Activated B cell treated with CpG ODN at 0.5 μM for 24 hours (primary cell): ENCODE measurements at regions of chr9 and their contacts with region 1.

Region 1: DNA sequence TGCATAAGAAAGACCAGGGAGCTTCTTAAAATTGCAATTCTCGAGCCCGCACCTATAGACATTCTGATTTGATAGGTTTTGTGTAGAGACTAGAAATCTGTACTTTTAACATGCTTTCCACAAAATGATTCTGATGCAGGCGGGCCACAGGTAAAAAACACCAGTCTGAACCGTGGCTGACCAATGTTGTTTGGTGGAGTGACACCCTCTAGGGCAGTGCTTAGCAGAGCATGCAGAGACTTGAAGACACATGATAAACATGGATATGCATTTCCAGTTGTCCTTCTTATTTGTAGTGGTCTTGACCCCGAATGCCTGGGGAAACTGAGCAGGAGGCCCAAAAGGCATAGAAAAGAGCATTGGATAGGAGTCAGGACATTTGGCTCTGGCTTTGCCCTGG is 10.5 kb upstream of the COL15A1 start:
- DNase-seq: no peak
- ATAC-seq: no peak
- H3K4me3 Mint-ChIP-seq: no peak overlapping the region
- H3K27ac Mint-ChIP-seq: no peak overlapping the region
- H3K4me1 Mint-ChIP-seq: no peaks in the 10 kb centered on the region
- H3K27me3 Mint-ChIP-seq: peaks cover 19% of the 10 kb centered on the region
- CTCF ChIP-seq: no peak

Region 2: DNA sequence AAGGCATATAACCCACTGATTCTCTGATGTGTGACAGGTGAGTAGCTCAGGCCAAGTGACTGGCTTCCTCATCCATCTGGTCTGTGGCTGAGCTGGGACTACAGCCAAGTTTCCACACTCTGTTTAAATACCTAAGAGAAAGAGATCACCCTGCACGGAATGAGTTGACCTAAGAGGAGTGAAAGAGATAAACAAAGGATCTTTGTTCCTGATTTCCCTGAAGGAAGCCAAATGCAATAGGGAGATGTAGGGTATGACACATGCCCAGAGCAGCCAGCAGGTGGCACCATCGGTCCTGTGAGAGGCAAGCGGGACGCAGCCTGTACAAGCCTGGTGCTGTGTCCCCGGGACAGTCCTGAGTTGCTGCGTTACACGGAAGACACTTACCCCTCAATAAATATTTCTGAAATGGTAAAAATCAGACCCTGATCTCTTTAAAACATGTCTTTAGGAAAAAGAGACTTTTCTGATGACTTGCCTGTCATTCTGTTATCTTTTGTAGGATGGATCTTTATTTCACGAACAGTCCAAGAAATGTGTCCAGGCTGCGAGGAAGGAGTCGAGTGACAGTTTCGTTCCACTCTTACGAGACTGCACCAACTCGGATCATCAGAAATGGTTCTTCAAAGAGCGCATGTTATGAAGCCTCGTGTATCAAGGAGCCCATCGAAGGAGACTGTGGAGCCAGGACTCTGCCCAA is 84.6 kb before region 1 on chr9:
- CTCF ChIA-PET with region 1: no interaction called
- POLR2A ChIA-PET with region 1: no interaction called
- intact Hi-C with region 1: no loop called
- DNase-seq: peak; percentile 59
- ATAC-seq: peak; percentile 97
- H3K4me3 Mint-ChIP-seq: no peak overlapping the region
- H3K27ac Mint-ChIP-seq: no peak overlapping the region
- H3K4me1 Mint-ChIP-seq: no peaks in the 10 kb centered on the region
- H3K27me3 Mint-ChIP-seq: no peaks in the 10 kb centered on the region
- CTCF ChIP-seq: peak; percentile 59

Region 3: DNA sequence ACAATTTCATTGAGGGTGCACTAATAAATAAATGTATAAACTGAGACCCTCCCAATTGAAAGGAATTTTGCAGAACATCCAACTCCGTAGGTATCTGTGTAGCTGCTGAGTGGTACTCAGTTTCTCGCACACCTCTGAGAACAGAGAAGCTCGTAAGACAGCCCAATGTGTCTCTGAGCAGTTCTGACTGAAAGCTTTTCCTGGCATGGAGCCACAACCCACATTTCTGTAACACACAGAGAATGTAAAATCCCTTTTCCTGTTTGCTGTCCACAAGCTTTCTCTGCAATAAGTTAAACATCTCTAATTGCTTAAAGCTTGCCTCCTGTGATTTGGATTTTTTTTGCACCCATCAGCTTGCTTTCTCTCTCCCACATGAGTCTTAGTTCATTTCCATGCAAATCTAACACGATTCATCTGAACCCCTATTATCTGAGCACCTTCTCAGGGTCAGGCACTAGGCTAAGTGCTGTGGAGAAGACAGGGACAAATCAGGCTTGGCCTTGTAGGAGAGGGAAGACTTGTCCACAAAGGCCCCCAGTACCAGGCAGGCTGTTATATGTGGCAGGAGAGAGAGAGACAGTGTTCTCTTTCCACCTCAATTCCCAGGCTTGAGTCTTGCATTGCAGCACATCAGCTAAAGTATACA is 33.7 kb before region 1 on chr9:
- CTCF ChIA-PET with region 1: no interaction called
- POLR2A ChIA-PET with region 1: no interaction called
- intact Hi-C with region 1: no loop called
- DNase-seq: no peak
- ATAC-seq: no peak
- H3K4me3 Mint-ChIP-seq: no peak overlapping the region
- H3K27ac Mint-ChIP-seq: no peak overlapping the region
- H3K4me1 Mint-ChIP-seq: no peaks in the 10 kb centered on the region
- H3K27me3 Mint-ChIP-seq: peaks cover 30% of the 10 kb centered on the region
- CTCF ChIP-seq: no peak

Region 4: GRCh38 chr9:98916660-98917059 is 16.5 kb before region 1 on chr9:
- CTCF ChIA-PET with region 1: no interaction called
- POLR2A ChIA-PET with region 1: no interaction called
- intact Hi-C with region 1: loop called (anchors 1 kb)
- DNase-seq: no peak
- ATAC-seq: no peak
- H3K4me3 Mint-ChIP-seq: no peak overlapping the region
- H3K27ac Mint-ChIP-seq: no peak overlapping the region
- H3K4me1 Mint-ChIP-seq: no peaks in the 10 kb centered on the region
- H3K27me3 Mint-ChIP-seq: peaks cover 6% of the 10 kb centered on the region
- CTCF ChIP-seq: no peak

Region 5: DNA sequence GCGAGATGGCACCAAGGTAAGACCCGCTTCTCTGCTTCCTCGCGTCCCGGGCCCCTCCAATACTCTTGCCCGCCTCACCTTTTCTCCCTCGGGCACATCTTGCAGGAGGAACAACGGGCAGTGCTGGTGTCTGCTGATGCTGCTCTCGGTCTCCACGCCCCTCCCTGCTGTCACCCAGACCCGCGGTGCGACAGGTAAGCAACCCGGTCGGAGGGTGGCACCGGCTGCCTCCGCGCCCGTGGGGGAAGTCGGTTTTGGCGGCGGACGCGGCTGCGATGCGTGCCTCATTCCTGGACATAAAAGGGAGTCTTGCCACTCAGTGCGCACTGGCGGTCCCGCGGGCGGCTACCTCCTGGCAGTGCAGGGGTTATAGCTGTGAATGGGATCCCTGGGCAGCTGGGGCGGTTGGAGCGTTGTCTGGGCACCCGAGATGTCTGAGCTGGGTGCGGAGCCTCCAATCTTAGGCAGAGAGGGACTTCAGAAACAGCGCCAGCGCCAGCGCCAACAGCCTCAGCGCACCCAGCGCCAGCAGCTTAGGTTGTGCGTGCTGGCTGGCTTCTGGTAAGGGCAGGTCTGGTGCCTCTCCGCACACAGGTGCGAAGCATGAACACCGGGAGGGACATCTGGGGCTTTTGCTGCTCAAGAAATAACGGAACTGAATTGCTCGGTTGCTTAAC is 11.0 kb after region 1 on chr9:
- CTCF ChIA-PET with region 1: no interaction called
- POLR2A ChIA-PET with region 1: no interaction called
- intact Hi-C with region 1: no loop called
- DNase-seq: no peak
- ATAC-seq: no peak
- H3K4me3 Mint-ChIP-seq: peak overlapping the region; percentile 56
- H3K27ac Mint-ChIP-seq: no peak overlapping the region
- H3K4me1 Mint-ChIP-seq: peaks cover 15% of the 10 kb centered on the region
- H3K27me3 Mint-ChIP-seq: peaks cover 65% of the 10 kb centered on the region
- CTCF ChIP-seq: no peak